Dorsolateral prefrontal cortex (tissue), 120 donors: ENCODE measurements at regions of chr5 and their contacts with region 1.

Region 1: GRCh38 chr5:152560512-152561137 is 155.5 kb upstream of the NMUR2 start:
- DNase-seq: peak; percentile 59 to 89 (median 80)
- H3K4me3 ChIP-seq: no peak overlapping the region
- H3K27ac ChIP-seq: no peak overlapping the region
- H3K27me3 ChIP-seq: no peaks in the 10 kb centered on the region
- CTCF ChIP-seq: peak; percentile 56 to 93 (median 86)

Region 2: GRCh38 chr5:152358871-152359568 is 201.6 kb before region 1 on chr5:
- intact Hi-C with region 1: no loop called
- DNase-seq: no peak
- H3K4me3 ChIP-seq: no peak overlapping the region
- H3K27ac ChIP-seq: no peak overlapping the region
- H3K27me3 ChIP-seq: no peaks in the 10 kb centered on the region
- CTCF ChIP-seq: no peak

Region 3: DNA sequence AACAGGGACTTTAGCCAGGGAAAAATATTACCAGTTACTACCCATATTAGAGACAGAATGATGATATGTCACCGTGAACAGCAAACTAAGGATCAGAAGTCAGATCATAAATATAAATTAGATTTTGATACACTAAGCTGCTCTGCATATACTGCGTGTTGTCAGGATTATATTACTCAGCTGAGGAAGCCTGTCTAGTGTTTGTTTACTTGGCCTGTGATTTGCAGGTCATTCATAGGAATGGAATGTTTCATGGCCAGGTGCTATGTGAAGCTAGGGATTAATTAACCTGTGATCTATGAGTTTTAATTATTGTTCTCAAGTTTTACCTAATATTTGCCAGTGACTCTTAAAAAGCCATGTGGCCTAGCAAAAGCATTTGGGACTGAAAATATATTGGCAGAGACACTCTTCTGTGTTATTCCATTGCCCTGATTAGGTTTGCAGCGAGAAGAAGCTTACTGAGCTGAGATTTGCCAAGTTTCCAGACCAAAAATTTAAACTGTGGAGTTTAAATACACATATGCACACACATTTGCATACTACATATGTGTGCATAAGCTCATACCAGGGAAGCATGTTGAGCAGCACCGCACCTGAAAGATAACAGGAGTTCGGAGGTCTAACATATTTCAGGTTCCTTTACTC is 433.5 kb after region 1 on chr5:
- intact Hi-C with region 1: no loop called
- DNase-seq: no peak
- H3K4me3 ChIP-seq: no peak overlapping the region
- H3K27ac ChIP-seq: no peak overlapping the region
- H3K27me3 ChIP-seq: no peaks in the 10 kb centered on the region
- CTCF ChIP-seq: no peak

Region 4: DNA sequence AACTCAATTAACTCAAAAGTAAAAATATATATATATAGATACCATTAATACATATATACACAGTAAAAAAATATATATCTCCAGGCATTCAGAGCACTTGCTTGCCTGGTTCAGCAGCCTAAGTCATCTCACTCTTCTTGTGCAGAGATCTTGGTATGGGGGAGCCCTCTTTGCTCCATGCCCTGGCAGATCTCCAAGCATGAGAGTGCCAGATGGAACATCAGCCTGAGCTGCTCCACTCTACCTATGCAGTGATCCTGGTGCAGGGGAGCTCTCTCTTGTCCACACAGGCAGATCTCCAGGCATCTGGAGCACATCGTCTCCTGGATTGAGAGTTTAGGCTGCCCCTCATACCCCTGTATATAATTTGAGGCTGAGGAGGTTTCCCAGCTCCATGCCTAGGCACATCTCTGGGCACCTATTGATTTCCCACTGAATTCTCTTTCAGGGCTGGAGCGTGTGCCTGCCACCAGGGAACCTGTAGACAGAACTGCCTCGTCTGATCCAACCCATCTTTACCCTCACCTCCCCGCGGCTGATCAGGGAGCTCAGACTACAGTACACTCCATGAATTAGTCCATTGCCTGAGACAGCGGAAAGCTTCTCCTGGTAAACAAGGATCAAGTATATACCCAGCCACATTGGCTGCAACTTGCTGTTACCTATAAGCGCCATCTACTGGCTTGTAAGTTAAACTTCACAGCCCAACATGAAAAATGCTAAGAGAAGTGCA is 587.4 kb after region 1 on chr5:
- intact Hi-C with region 1: loop called (anchors 10 kb)
- DNase-seq: no peak
- H3K4me3 ChIP-seq: no peak overlapping the region
- H3K27ac ChIP-seq: no peak overlapping the region
- H3K27me3 ChIP-seq: no peaks in the 10 kb centered on the region
- CTCF ChIP-seq: peak in 55 of 56 donors; percentile 13 to 75 (median 55)